ENCODE measurements at regions of chr7 and their contacts with region 1.

Region 1: GRCh38 chr7:154817224-154817896 is 185.6 kb downstream of the PAXIP1 start:
- DNase-seq: no peak
- ATAC-seq: no peak
- H3K4me3 ChIP-seq: no peak overlapping the region
- H3K27ac ChIP-seq: no peak overlapping the region
- H3K4me1 ChIP-seq: no peaks in the 10 kb centered on the region
- H3K27me3 ChIP-seq: peaks cover 0 to 14% (median 0%) of the 10 kb centered on the region in 7 donors
- CTCF ChIP-seq: no peak

Region 2: GRCh38 chr7:153590139-153590538 is 1227.2 kb before region 1 on chr7:
- intact Hi-C with region 1: loop called in 1 of 10 experiments (anchors 10 kb)
- DNase-seq: no peak
- ATAC-seq: no peak
- H3K4me3 ChIP-seq: no peak overlapping the region
- H3K27ac ChIP-seq: no peak overlapping the region
- H3K4me1 ChIP-seq: no peaks in the 10 kb centered on the region
- H3K27me3 ChIP-seq: no peaks in the 10 kb centered on the region
- CTCF ChIP-seq: no peak

Region 3: GRCh38 chr7:154984601-154985188 is 167.3 kb after region 1 on chr7:
- intact Hi-C with region 1: no loop called
- DNase-seq: no peak
- ATAC-seq: no peak
- H3K4me3 ChIP-seq: no peak overlapping the region
- H3K27ac ChIP-seq: no peak overlapping the region
- H3K4me1 ChIP-seq: peaks cover 0 to 9% (median 0%) of the 10 kb centered on the region in 9 donors
- H3K27me3 ChIP-seq: no peaks in the 10 kb centered on the region
- CTCF ChIP-seq: no peak

Measured in heart right ventricle (tissue), 16 donors.